Panc1 (cell line): ENCODE measurements at regions of chr2 and their contacts with region 1.

Region 1: DNA sequence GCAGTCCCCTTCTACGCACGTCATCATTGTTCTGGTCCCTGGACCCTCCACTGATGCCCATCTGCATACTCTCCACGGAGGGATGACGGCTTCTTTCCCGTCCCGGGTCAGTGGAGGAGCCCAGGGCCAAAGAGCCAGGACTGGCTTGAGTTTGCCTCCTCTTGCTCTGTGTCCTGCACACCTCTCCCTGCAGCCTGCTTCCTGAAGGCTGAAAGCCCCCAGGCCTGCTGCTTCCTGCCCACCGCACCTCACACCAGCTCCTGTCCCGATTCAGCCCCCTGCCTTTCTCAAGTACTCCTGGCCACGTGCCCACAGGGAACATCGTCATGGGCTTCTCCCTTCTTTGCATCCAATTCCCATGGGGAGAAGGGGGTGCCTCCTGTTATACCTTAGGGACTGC is 7.1 kb downstream of the ADCY3 start:
- DNase-seq: no peak
- ATAC-seq: no peak
- H3K4me3 ChIP-seq: no peak overlapping the region
- H3K27ac ChIP-seq: no peak overlapping the region
- H3K4me1 ChIP-seq: no peaks in the 10 kb centered on the region
- H3K27me3 ChIP-seq: no peaks in the 10 kb centered on the region
- CTCF ChIP-seq: no peak

Region 2: DNA sequence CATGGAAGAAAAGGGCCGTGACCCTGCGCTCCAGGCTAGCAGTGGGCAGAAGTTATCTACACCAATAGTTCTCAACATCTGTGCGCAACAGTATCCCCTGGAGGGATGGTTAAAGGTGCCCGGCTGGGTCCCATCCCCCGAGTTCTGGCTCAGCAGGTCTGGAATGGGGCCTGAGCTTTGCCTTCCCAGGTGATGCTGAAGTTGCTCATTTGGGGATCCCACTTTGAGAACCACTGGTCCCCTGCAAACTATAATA is 397.7 kb after region 1 on chr2:
- CTCF ChIA-PET with region 1: interaction called, 13 read pairs
- POLR2A ChIA-PET with region 1: no interaction called
- in situ Hi-C with region 1: no loop called
- intact Hi-C with region 1: no loop called
- DNase-seq: no peak
- ATAC-seq: no peak
- H3K4me3 ChIP-seq: no peak overlapping the region
- H3K27ac ChIP-seq: no peak overlapping the region
- H3K4me1 ChIP-seq: peaks cover 7% of the 10 kb centered on the region; the same call in 1 of the 2 replicates
- H3K27me3 ChIP-seq: no peaks in the 10 kb centered on the region
- CTCF ChIP-seq: no peak